ENCODE measurements at regions of chr12 and their contacts with region 1.

Region 1: GRCh38 chr12:20272801-20273200 is 95.5 kb upstream of the PDE3A start:
- DNase-seq: peak; percentile 27 to 35
- ATAC-seq: peak; percentile 94 to 96
- H3K4me3 ChIP-seq: no peak overlapping the region
- H3K27ac ChIP-seq: peak overlapping the region; percentile 51 to 84 (median 75)
- H3K4me1 ChIP-seq: peaks cover 20 to 37% of the 10 kb centered on the region in 2 donors
- H3K27me3 ChIP-seq: no peaks in the 10 kb centered on the region
- CTCF ChIP-seq: no peak
- POLR2A ChIP-seq: no peak

Region 2: DNA sequence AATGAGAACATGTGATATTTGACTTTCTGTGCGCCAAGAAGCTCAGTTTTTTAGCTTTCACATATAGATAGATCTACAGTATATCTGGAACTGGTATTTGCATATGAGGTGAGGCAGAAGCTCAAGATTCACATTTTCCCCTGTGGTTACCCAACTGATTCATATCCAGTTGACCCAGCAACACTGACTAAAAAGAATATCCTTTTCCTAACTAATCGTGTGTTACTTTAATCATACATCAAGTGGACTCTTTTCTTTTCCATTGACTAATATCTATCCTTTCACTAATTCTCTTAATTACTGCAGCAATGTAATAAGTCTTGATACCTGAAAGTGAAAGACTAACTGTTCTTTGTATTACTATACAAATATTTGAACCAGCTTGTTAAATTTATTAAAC is 597.4 kb before region 1 on chr12:
- in situ Hi-C with region 1: no loop called
- intact Hi-C with region 1: no loop called
- DNase-seq: no peak
- ATAC-seq: no peak
- H3K4me3 ChIP-seq: no peak overlapping the region
- H3K27ac ChIP-seq: no peak overlapping the region
- H3K4me1 ChIP-seq: no peaks in the 10 kb centered on the region
- H3K27me3 ChIP-seq: no peaks in the 10 kb centered on the region
- CTCF ChIP-seq: no peak
- POLR2A ChIP-seq: no peak

Region 3: GRCh38 chr12:19833775-19834501 is 438.9 kb before region 1 on chr12:
- in situ Hi-C with region 1: no loop called
- intact Hi-C with region 1: no loop called
- DNase-seq: no peak
- ATAC-seq: no peak
- H3K4me3 ChIP-seq: no peak overlapping the region
- H3K27ac ChIP-seq: no peak overlapping the region
- H3K4me1 ChIP-seq: no peaks in the 10 kb centered on the region
- H3K27me3 ChIP-seq: no peaks in the 10 kb centered on the region
- CTCF ChIP-seq: no peak
- POLR2A ChIP-seq: no peak

Region 4: GRCh38 chr12:20194171-20194570 is 78.6 kb before region 1 on chr12:
- in situ Hi-C with region 1: no loop called
- intact Hi-C with region 1: no loop called
- DNase-seq: no peak
- ATAC-seq: no peak
- H3K4me3 ChIP-seq: no peak overlapping the region
- H3K27ac ChIP-seq: no peak overlapping the region
- H3K4me1 ChIP-seq: no peaks in the 10 kb centered on the region
- H3K27me3 ChIP-seq: no peaks in the 10 kb centered on the region
- CTCF ChIP-seq: no peak
- POLR2A ChIP-seq: no peak

Region 5: GRCh38 chr12:20212658-20213555 is 59.9 kb before region 1 on chr12:
- in situ Hi-C with region 1: no loop called
- intact Hi-C with region 1: no loop called
- DNase-seq: peak; percentile 68 to 76
- ATAC-seq: peak; percentile 97
- H3K4me3 ChIP-seq: peak overlapping the region in 1 of 4 donors; percentile 9
- H3K27ac ChIP-seq: peak overlapping the region; percentile 39 to 59 (median 53)
- H3K4me1 ChIP-seq: peaks cover 10 to 13% of the 10 kb centered on the region in 2 donors
- H3K27me3 ChIP-seq: no peaks in the 10 kb centered on the region
- CTCF ChIP-seq: no peak
- POLR2A ChIP-seq: no peak

Region 6: DNA sequence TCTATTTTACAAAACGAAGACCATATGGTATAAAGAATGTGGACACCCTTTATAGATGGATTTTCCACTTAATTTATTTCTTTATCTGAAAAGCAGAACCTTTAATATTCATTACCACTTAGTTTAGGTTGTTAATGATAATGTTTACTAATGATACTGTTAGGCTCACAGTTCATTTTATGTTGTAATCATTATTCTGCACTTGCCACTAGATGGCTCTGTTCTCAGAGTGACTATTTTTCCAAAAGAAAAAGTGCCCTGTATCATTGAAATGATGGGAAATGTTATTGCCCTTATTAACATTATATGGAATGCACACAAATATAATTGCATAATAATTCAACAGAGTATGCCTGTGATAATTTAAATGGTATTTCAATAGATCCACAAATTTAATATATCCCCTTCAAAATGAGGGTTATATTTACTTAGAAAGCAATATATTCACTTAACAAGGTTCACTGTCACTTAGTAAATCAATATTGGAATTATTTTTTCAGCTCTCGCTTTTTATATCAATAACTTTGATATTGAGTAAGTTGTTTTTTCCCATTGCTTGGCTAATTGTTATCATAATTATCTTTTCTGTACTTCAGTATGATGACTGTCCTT is 191.2 kb after region 1 on chr12:
- in situ Hi-C with region 1: no loop called
- intact Hi-C with region 1: loop called (anchors 10 kb)
- DNase-seq: no peak
- ATAC-seq: no peak
- H3K4me3 ChIP-seq: no peak overlapping the region
- H3K27ac ChIP-seq: peak overlapping the region in 1 of 4 donors; percentile 7
- H3K4me1 ChIP-seq: peaks cover 6 to 10% of the 10 kb centered on the region in 2 donors
- H3K27me3 ChIP-seq: no peaks in the 10 kb centered on the region
- CTCF ChIP-seq: peak in 4 of 5 experiments; percentile 32 to 56 (median 44)
- POLR2A ChIP-seq: no peak

Measured in gastrocnemius medialis (tissue), 4 donors.